Cardiac septum (tissue), 1 donor: ENCODE measurements at regions of chr13 and their contacts with region 1.

Region 1: DNA sequence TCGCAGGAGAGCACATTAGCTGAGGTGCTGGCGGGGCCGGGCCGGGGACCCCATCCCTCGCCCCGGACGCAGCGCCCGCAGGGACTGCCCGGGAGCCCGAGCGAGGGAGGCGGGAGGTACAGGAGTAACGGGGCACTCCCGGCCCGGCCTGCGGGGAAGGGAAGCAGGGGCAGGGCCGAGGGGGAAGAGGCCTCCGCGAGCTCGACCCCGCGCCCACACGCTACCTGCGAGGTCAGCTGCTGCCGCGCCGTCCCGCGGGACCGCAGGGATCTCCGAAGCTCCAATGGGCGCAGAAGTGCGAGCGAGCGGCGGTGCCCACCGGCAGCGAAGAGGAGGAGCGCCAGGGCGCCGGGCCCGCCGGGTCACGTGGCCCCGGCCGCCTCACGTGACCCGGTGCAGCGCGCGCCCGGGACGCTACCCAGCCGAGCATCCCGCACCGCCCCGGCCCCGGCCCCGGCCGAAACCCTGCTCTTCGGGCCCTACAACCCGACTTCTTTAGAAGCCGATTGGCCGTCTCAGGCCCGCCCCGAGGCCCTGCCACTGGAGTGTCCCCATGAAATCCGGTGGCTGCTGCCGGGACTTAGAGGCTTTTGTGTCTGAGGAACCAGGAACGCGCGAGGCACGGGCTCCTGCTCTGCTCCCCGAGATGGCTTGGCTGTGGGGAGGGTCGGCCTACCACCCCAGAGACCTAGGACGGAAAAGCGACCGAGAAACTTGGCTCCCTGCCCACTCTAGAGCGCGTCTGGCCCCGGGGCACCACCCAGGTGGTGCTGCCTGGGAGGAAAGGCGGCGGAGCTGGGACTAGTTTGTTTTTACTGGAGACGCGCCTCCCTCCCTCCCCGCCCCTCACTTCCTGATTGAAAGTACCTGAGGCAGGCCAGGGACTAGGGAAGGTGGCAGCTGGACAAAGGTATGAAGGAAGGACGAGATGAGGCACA is at the start of gene RCBTB1:
- DNase-seq: peak; percentile 83
- total RNA-seq, gene RCBTB1: 15.9 TPM

Region 2: GRCh38 chr13:49443704-49444523 is 141.6 kb before region 1 on chr13 and contains the starts of genes CAB39L and SETDB2:
- intact Hi-C with region 1: loop called (anchors 2 kb)
- DNase-seq: peak; percentile 100
- total RNA-seq, gene CAB39L: 9.8 TPM
- total RNA-seq, gene SETDB2: 11.2 TPM

Region 3: DNA sequence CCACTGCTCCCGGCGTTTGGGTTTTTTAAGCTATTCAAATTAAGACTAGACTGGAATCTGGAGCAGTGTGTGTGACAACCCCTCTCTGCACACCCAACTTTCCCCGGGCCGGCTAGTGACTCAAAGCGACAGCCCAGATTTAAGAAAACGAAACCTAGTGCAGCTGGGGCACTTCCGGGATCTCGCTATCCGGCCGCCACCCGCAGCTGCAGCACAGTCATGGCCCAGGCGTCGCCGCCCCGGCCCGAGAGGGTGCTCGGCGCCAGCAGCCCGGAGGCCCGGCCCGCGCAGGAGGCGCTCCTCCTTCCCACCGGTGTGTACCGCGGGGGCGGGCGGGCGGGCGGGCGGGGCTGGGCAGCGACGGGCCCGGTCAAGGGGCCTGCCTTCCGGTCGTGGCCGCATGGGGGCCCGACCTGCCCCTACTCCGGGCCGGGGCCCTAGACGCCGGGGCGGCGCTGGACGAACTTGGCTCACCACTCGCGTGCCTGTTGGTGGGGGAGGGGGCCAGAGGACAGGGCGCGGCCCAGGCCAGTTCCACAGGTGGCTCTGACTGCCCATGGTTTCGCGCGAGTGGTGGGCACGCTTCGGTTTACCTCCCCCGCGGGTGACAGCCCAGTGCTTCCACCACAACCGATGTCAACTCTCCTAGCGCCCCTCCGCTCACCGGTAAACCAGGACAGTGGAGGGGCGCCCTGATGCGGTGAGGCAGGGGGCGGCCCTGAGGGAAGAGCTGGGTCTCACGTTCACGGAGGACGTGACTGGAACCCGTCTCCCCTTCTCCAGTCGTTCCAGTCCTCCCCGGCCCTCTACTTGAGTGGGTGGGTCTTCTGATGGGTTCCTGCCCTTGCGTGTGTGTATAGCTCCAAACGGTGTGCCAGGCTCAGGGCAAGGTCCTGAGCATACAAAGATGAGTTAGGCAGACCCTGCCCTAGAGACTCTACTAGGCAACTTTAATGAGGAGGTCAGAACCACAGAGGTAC is 89.4 kb before region 1 on chr13 and contains the start of gene PHF11:
- intact Hi-C with region 1: loop called (anchors 5 kb)
- DNase-seq: peak; percentile 93
- total RNA-seq, gene PHF11: 20.5 TPM